ENCODE measurements at regions of chr12 and their contacts with region 1.

Region 1: DNA sequence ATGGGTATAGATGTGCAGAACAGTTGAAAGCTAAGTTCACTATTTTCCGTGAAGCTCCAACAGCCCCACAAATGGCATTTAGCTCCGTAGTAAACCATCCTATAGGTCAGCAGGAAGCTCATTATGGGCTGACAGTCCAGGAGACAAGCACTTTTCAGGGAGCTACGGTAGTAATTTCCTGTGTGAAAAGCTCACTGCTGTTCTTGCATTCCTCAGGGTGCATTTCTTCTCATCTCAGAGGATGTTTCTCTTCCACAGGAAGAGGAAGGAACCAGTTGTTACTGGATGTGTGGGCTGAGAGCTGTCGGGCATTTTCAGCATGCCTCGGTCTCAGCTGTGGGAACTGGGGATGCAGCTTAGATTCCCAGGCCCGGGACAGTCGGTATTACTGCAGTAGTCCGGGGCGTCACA is 72.8 kb downstream of the GALNT4 start:
- DNase-seq: peak in 1 of 2 donors; percentile 69
- H3K4me3 ChIP-seq: peak overlapping the region in 1 of 2 donors; percentile 47
- H3K27ac ChIP-seq: peak overlapping the region; percentile 80 to 82
- H3K4me1 ChIP-seq: peaks cover 14 to 26% of the 10 kb centered on the region in 2 donors
- H3K27me3 ChIP-seq: no peaks in the 10 kb centered on the region
- CTCF ChIP-seq: no peak

Region 2: DNA sequence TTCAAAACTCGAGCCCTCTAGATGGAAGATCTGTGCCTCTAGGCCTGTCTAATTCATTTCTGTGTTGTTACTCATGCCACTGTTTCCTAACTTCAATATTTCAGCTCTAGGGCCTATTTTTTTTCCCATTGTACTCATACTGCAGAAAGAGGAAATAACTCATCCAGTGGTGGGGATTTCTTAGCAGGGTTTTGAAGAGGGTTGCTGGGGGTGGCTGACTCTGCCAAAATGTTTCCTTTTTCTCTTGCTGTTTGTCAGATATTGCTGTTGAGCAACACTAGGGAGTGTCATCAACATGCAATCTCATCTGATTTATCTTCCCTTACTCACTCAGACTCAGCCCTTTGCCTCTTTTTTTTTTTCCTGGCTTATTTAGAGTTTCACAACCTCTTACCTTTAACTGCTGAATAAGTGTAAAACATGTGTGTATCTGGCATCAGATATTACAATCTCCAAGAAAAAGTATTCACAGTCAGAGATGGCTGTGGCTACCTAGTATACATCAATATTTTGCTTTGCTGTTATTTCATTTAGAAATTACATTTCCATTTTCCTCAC is 289.1 kb before region 1 on chr12:
- intact Hi-C with region 1: loop called (anchors 5 kb)
- DNase-seq: peak; percentile 16 to 85
- H3K4me3 ChIP-seq: no peak overlapping the region
- H3K27ac ChIP-seq: peak overlapping the region; percentile 64 to 65
- H3K4me1 ChIP-seq: peaks cover 0 to 20% of the 10 kb centered on the region in 2 donors
- H3K27me3 ChIP-seq: no peaks in the 10 kb centered on the region
- CTCF ChIP-seq: no peak

Region 3: DNA sequence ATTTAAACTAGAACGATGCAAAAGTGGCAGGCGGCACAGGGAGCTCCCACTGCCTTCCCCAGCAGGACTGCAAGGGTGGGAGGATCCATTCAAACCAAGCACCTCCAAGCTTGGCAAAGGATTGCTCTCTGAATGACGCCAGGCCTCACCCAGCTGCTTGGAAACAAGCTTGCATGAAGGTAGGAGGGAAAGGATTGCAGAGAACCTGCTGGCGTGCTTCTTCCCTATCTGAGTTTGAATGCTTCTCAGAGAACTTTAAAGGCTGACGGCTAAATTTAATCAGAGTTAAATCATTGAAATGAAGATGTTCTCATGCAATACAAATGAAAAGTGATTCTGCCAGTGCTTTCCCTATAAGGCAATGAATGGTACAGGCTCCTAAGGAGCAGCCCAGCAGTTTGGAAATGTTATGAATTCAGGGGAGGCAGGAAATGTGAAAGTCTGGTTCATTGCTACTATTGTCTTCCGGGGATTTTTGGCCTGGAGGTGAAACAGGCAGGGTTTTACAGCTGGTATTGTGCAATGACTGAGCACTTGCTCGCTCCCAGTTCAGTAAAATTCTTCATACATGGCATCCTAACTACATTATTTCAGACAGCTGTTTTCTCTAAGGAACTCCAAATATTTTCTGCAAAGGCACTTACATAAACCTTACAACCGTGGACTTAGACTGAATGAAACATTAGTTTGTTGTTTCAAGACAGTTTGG is 67.6 kb before region 1 on chr12:
- intact Hi-C with region 1: loop called (anchors 2 kb)
- DNase-seq: peak in 1 of 2 donors; percentile 72
- H3K4me3 ChIP-seq: peak overlapping the region; percentile 1 to 41
- H3K27ac ChIP-seq: peak overlapping the region; percentile 68 to 78
- H3K4me1 ChIP-seq: peaks cover 3 to 15% of the 10 kb centered on the region in 2 donors
- H3K27me3 ChIP-seq: no peaks in the 10 kb centered on the region
- CTCF ChIP-seq: no peak

Region 4: GRCh38 chr12:89439941-89440340 is 11.9 kb before region 1 on chr12:
- intact Hi-C with region 1: no loop called
- DNase-seq: no peak
- H3K4me3 ChIP-seq: no peak overlapping the region
- H3K27ac ChIP-seq: no peak overlapping the region
- H3K4me1 ChIP-seq: no peaks in the 10 kb centered on the region
- H3K27me3 ChIP-seq: no peaks in the 10 kb centered on the region
- CTCF ChIP-seq: no peak

Region 5: GRCh38 chr12:89504560-89505346 is 52.9 kb after region 1 on chr12:
- intact Hi-C with region 1: no loop called
- DNase-seq: no peak
- H3K4me3 ChIP-seq: no peak overlapping the region
- H3K27ac ChIP-seq: no peak overlapping the region
- H3K4me1 ChIP-seq: no peaks in the 10 kb centered on the region
- H3K27me3 ChIP-seq: no peaks in the 10 kb centered on the region
- CTCF ChIP-seq: no peak

Measured in ascending aorta (tissue), 2 donors.